ENCODE measurements at regions of chr20 and their contacts with region 1.

Region 1: GRCh38 chr20:3250091-3250504 is 11.1 kb upstream of the SLC4A11 start:
- DNase-seq: peak in 1 of 2 experiments; percentile 34
- H3K4me3 ChIP-seq: no peak overlapping the region
- H3K27ac ChIP-seq: no peak overlapping the region
- H3K4me1 ChIP-seq: no peaks in the 10 kb centered on the region
- H3K27me3 ChIP-seq: no peaks in the 10 kb centered on the region
- CTCF ChIP-seq: peak; percentile 61

Region 2: GRCh38 chr20:3262566-3262965 is 12.5 kb after region 1 on chr20:
- CTCF ChIA-PET with region 1: no interaction called
- POLR2A ChIA-PET with region 1: no interaction called
- intact Hi-C with region 1: no loop called
- DNase-seq: no peak
- H3K4me3 ChIP-seq: no peak overlapping the region
- H3K27ac ChIP-seq: no peak overlapping the region
- H3K4me1 ChIP-seq: no peaks in the 10 kb centered on the region
- H3K27me3 ChIP-seq: no peaks in the 10 kb centered on the region
- CTCF ChIP-seq: no peak

Region 3: DNA sequence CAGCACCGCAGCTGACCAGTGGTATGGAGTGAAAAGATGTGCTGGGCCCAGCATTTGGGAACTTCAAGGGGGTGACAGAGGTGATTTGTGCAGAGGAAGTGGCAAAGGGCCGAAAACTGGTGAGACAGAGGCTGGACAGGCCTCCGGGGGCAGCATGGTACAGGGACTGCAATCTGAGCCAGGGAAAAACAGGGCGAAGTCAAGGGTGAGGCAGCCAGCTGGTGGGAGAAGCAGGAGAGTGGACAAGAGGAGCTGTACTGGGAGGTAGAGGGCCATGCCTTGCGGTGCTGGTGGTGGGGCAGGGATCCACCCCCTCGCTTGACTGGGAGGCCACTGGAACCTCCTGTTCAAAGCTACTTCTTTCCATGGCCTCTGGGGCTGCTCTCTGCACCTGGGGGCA is 420.4 kb after region 1 on chr20:
- CTCF ChIA-PET with region 1: no interaction called
- POLR2A ChIA-PET with region 1: interaction called, 26 read pairs
- intact Hi-C with region 1: no loop called
- DNase-seq: no peak
- H3K4me3 ChIP-seq: no peak overlapping the region
- H3K27ac ChIP-seq: no peak overlapping the region
- H3K4me1 ChIP-seq: no peaks in the 10 kb centered on the region
- H3K27me3 ChIP-seq: peaks cover 23% of the 10 kb centered on the region
- CTCF ChIP-seq: peak; percentile 33; the same call in 1 of the 2 replicates

Region 4: GRCh38 chr20:4304601-4305000 is 1054.5 kb after region 1 on chr20:
- CTCF ChIA-PET with region 1: no interaction called
- POLR2A ChIA-PET with region 1: no interaction called
- intact Hi-C with region 1: no loop called
- DNase-seq: no peak
- H3K4me3 ChIP-seq: no peak overlapping the region
- H3K27ac ChIP-seq: no peak overlapping the region
- H3K4me1 ChIP-seq: no peaks in the 10 kb centered on the region
- H3K27me3 ChIP-seq: peaks cover 6% of the 10 kb centered on the region; the same call in 1 of the 2 replicates
- CTCF ChIP-seq: no peak